ENCODE measurements at regions of chr3 and their contacts with region 1.

Region 1: DNA sequence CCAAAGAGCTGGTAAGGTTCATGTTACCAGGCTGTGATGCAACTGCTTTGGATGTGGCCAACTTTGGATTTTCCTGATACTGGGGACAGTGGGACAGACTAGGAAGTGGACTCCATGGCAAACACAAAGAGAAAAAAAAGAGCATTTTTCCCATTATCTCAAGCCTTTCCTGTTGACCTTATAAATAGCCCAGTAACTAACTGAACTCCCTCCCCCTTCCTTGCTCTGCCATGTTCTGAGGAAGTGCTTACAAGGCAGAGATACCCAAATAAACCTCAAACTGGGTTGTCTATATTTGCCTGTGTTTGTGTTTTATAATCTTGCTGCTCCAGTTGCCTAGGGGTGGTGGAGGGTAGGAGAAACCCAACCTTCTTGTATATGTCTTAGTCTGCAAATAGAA is 27.3 kb upstream of the SLC9A9 start:
- DNase-seq: no peak
- H3K4me3 ChIP-seq: no peak overlapping the region
- H3K4me3 Mint-ChIP-seq: no peak overlapping the region
- H3K27ac ChIP-seq: no peak overlapping the region
- H3K27ac Mint-ChIP-seq: peak overlapping the region in 1 of 7 donors; percentile 36
- H3K4me1 ChIP-seq: no peaks in the 10 kb centered on the region
- H3K4me1 Mint-ChIP-seq: peaks cover 0 to 8% (median 6%) of the 10 kb centered on the region in 4 donors
- H3K27me3 ChIP-seq: no peaks in the 10 kb centered on the region
- H3K27me3 Mint-ChIP-seq: no peaks in the 10 kb centered on the region

Region 2: DNA sequence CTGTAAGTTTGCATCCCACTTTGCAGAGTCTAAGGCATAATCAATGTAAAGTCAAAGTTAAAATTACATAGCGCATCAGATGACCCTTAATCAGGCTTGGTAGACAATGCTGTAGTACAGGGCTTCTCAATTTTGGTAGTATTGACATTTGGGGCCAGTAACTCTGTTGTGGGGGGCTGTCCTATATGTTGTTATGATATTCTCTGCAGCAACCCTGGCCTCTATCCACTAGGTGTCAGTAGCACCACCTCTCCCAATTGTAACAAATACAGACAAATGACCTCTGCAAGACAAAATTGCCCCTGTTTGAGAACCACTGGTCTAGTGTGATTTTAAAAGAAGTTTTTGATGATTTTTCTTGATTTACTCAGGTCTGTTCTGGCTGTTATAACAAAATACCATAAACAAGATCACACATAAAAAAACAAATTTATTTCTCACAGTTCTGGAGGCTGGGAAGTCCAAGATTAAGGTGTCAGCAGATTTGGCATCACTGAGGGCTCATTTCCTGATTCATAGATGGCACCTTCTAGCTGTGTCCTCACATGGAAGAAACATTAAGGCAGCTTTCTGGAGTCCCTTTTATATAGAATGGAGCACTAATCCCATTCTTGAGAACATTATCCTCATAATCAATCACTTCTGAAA is 10.4 kb after region 1 on chr3:
- CTCF ChIA-PET with region 1: interaction called, 10 read pairs
- POLR2A ChIA-PET with region 1: no interaction called
- intact Hi-C with region 1: no loop called
- DNase-seq: peak in 4 of 5 donors; percentile 19 to 32 (median 22)
- H3K4me3 ChIP-seq: no peak overlapping the region
- H3K4me3 Mint-ChIP-seq: no peak overlapping the region
- H3K27ac ChIP-seq: no peak overlapping the region
- H3K27ac Mint-ChIP-seq: no peak overlapping the region
- H3K4me1 ChIP-seq: no peaks in the 10 kb centered on the region
- H3K4me1 Mint-ChIP-seq: no peaks in the 10 kb centered on the region
- H3K27me3 ChIP-seq: no peaks in the 10 kb centered on the region
- H3K27me3 Mint-ChIP-seq: peaks cover 2 to 4% of the 10 kb centered on the region in 2 donors

Region 3: DNA sequence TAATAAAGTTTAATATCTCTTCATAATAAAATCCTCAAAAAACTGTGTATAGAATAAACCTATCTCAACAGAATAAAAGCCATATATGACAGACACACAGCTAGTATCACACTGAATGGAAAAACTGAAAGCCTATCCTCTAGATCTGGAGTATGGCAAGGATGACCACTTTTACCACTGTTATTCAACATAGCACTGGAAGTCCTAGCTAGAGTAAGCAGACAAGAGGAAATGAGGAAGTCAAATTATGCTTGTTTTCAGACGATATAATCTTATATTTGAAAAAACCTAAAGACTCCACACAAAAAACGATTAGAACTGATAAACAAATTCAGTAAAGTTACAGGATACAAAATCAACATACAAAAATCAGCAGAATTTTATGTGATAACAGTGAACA is 38.7 kb after region 1 on chr3:
- CTCF ChIA-PET with region 1: no interaction called
- POLR2A ChIA-PET with region 1: no interaction called
- intact Hi-C with region 1: no loop called
- DNase-seq: no peak
- H3K4me3 ChIP-seq: no peak overlapping the region
- H3K4me3 Mint-ChIP-seq: no peak overlapping the region
- H3K27ac ChIP-seq: no peak overlapping the region
- H3K27ac Mint-ChIP-seq: no peak overlapping the region
- H3K4me1 ChIP-seq: no peaks in the 10 kb centered on the region
- H3K4me1 Mint-ChIP-seq: no peaks in the 10 kb centered on the region
- H3K27me3 ChIP-seq: no peaks in the 10 kb centered on the region
- H3K27me3 Mint-ChIP-seq: peaks cover 7 to 23% of the 10 kb centered on the region in 2 donors

Measured in CD4-positive, alpha-beta memory T cell (primary cell).